Adrenal gland (tissue), 19 donors: ENCODE measurements at regions of chr5 and their contacts with region 1.

Region 1: DNA sequence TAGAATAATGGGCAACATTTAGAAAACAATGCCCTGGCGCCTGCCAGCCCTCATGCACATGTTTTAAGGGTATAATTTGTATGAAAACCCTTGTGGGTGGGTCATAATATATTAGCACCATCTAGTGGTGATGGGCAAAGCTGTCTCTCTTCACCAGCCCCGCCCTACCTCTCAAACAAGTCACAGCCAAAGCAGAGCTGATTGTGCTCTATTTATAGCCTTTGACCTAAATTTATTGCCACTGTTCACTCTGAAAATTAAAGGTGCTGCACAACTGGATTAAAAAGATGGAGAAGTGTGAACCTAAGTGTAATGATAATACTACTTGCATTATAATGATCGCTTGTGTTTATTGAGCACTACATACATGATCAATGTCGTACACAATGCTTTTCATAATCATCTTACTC is 131.9 kb upstream of the ANKH start:
- DNase-seq: peak; percentile 46 to 83 (median 67)
- H3K4me3 ChIP-seq: no peak overlapping the region
- H3K27ac ChIP-seq: no peak overlapping the region
- H3K4me1 ChIP-seq: peaks cover 4 to 5% of the 10 kb centered on the region in 2 donors
- H3K27me3 ChIP-seq: no peaks in the 10 kb centered on the region
- CTCF ChIP-seq: peak; percentile 67 to 83 (median 76)
- POLR2A ChIP-seq: no peak

Region 2: DNA sequence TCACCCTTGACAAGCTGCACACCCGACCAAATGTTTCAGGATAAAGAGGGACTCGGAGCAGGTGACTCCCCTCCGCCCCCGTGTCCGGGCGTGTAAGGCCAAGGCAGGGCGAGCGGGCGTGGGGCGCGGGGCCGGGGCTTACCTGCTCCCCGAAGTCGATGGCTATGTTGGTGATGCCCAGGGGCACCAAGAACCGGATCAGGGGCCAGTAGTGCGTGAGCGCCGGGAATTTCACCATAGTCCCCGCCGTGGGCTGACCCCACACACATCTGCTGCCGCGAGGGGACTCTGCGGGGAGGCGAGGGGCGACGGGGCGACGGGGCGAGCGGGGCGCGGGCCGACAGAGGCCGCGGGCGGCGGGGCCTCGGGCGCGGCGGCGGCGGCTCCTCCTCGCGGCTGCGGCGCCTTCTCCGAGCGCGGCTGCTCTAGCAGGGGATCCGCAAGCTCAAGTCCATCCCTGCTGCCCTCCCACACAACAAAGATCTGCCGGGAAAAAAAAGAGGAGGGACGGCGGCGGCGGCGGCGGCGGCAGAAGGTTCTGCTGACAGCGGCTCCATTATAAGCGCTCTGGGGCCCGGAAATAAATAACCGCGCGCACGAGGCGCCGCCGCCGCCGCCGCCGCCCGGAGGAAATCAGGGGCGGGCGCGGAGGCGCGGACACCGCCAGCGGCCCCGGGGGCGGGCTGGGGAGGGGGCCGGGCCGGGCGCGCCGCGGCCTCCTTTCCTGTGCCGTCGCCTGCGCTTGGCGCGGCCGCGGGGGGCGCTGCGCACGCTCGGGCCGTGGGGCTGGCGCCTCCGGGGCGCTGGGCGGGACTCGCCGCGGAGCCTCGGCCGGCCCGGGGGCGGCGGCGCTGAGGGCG is 132.1 kb before region 1 on chr5 and contains the start of gene ANKH:
- intact Hi-C with region 1: loop called in 1 of 2 experiments (anchors 10 kb)
- DNase-seq: peak; percentile 59 to 79 (median 66)
- H3K4me3 ChIP-seq: peak within 1 kb of the TSS in 3 of 4 donors; percentile 25 to 77 (median 31)
- H3K27ac ChIP-seq: peak within 1 kb of the TSS; percentile 21 to 97 (median 85)
- H3K4me1 ChIP-seq: peaks cover 0 to 12% of the 10 kb centered on the region in 2 donors
- H3K27me3 ChIP-seq: no peaks in the 10 kb centered on the region
- CTCF ChIP-seq: peak in 1 of 6 experiments; percentile 57
- POLR2A ChIP-seq: no peak
- total RNA-seq, gene ANKH: 4.8 to 45.6 (median 34.2) TPM